Activated T-helper 2 cell treated with anti-CD3 and anti-CD28 coated beads, Interferon-gamma antibody, Interleukin-2, Interleukin-4, amounts not matched to agents 10 μg/mL and 5 μg/mL and 100 μg/mL, durations not matched to agents 14 hours and 24 hours and 36 hours (primary cell): ENCODE measurements at regions of chr15 and their contacts with region 1.

Region 1: DNA sequence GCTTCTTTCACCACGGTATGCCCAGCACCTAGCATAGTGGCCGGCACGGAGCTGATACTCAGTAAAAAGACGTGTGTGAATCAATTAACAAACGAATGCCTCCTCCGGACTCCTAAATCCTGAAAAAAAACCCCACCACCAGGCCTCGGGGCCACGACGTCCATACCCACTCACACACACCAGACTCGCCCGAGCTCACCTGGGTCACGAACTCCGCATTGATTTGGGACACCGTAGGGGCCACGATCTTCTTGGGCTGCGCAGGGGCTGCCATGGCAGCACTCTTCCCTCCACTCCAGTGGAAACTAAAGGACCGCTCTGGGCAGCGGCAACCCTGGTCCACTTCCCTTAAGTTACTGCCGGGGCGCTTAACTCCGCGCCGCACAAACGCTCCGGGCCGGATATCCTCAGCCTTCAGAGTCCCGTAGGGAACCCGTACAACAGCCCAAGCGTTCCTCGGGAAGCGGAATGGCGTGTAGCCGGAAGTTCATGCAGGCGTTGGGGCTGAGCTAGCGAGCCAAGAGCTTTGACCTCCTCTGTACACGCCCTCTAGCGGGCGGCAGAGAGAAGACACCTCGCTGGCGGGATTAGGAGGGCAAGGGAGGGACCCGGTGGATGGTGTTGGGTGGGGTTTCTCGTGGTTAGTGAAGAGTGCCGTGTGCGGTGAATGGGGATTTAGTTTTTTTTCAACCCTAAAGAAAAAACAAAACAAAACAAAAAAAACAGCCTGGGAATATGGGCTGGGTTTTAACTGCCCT is at the start of gene AQR:
- DNase-seq: peak; percentile 86
- H3K4me3 Mint-ChIP-seq: peak within 1 kb of the TSS; percentile 95
- H3K27ac Mint-ChIP-seq: peak within 1 kb of the TSS; percentile 87
- H3K4me1 Mint-ChIP-seq: peaks cover 24% of the 10 kb centered on the region
- H3K27me3 Mint-ChIP-seq: no peaks in the 10 kb centered on the region
- total RNA-seq, gene AQR: 41.0 and 41.7 TPM in 2 replicates

Region 2: DNA sequence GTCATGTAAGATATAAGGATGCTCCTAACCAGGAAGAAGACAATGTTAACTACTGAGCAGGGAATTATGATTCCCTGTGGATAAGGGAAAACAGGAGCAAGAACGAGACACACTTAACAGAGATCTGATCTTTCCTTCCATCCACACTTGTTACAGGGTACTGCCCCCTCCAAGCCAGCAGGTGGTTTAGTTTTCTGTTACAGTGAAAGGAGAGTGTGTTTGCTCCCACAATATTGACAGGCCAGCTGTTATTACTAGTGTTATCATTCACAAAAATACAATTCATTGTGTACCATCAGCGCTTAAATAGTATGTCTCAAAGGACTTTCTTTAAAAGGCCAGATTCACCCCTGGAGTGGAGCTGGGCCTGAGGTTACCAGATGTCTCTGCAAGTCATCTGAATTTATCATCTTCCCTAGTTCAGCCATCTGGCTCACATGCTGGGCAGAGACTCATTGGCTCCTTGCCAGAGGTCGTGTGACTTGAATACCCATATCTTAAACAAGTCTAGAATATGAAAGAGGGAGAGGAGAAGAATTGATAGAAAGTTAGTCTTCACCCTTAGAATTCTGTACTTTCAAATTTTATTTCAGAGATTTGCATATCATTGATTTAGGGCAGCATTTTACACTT is 1758.2 kb before region 1 on chr15:
- intact Hi-C with region 1: loop called (anchors 5 kb)
- DNase-seq: no peak
- H3K4me3 Mint-ChIP-seq: no peak overlapping the region
- H3K27ac Mint-ChIP-seq: no peak overlapping the region
- H3K4me1 Mint-ChIP-seq: peaks cover 12% of the 10 kb centered on the region
- H3K27me3 Mint-ChIP-seq: peaks cover 7% of the 10 kb centered on the region

Region 3: GRCh38 chr15:34223904-34224596 is 745.5 kb before region 1 on chr15:
- intact Hi-C with region 1: loop called (anchors 10 kb)
- DNase-seq: no peak
- H3K4me3 Mint-ChIP-seq: peak overlapping the region; percentile 96
- H3K27ac Mint-ChIP-seq: peak overlapping the region; percentile 98
- H3K4me1 Mint-ChIP-seq: peaks cover 28% of the 10 kb centered on the region
- H3K27me3 Mint-ChIP-seq: no peaks in the 10 kb centered on the region

Region 4: GRCh38 chr15:34987985-34988873 is 18.7 kb after region 1 on chr15 and contains the start of gene ZNF770:
- intact Hi-C with region 1: loop called (anchors 1 kb)
- DNase-seq: peak; percentile 80
- H3K4me3 Mint-ChIP-seq: peak within 1 kb of the TSS; percentile 94
- H3K27ac Mint-ChIP-seq: peak within 1 kb of the TSS; percentile 98
- H3K4me1 Mint-ChIP-seq: peaks cover 35% of the 10 kb centered on the region
- H3K27me3 Mint-ChIP-seq: no peaks in the 10 kb centered on the region
- total RNA-seq, gene ZNF770: 40.7 and 41.0 TPM in 2 replicates